Ascending aorta (tissue), 2 donors: ENCODE measurements at regions of chr21 and their contacts with region 1.

Region 1: DNA sequence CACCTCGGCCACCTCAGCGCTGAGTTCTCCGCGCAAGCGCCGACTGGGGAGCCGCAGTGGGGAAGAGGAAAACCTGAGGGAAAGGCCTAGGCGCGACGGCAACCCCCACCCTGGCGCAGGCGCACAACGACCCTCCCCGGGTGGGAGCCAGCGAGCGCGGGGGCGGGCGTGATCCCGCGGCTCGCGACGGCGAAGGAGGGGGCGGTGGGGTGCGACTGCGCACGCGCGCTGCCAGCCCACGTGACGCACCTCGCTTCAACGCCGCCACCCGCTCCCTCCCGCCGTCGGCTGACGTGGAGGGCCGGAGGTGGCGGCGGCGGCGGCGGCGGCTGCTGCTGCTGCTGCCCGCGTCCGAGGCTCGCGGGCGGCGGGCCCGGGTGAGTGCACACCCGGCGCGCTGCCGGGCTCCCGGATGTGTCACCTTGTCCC is at the starts of genes PIGP and TTC3:
- DNase-seq: peak; percentile 73 to 96
- H3K4me3 ChIP-seq: peak within 1 kb of the TSS; percentile 84 to 96
- H3K27ac ChIP-seq: peak within 1 kb of the TSS; percentile 95 to 100
- H3K4me1 ChIP-seq: peaks cover 0 to 15% of the 10 kb centered on the region in 2 donors
- H3K27me3 ChIP-seq: no peaks in the 10 kb centered on the region
- CTCF ChIP-seq: no peak
- total RNA-seq, gene PIGP: 0.64 TPM
- total RNA-seq, gene TTC3: 70.7 TPM

Region 2: GRCh38 chr21:37220981-37221664 is 148.1 kb after region 1 on chr21:
- intact Hi-C with region 1: loop called (anchors 5 kb)
- DNase-seq: peak; percentile 88 to 97
- H3K4me3 ChIP-seq: peak overlapping the region; percentile 54 to 68
- H3K27ac ChIP-seq: peak overlapping the region; percentile 55 to 72
- H3K4me1 ChIP-seq: peaks cover 0 to 6% of the 10 kb centered on the region in 2 donors
- H3K27me3 ChIP-seq: no peaks in the 10 kb centered on the region
- CTCF ChIP-seq: peak in 2 of 3 experiments; percentile 29 to 53